Ascending aorta (tissue), 2 donors: ENCODE measurements at regions of chr1 and their contacts with region 1.

Region 1: DNA sequence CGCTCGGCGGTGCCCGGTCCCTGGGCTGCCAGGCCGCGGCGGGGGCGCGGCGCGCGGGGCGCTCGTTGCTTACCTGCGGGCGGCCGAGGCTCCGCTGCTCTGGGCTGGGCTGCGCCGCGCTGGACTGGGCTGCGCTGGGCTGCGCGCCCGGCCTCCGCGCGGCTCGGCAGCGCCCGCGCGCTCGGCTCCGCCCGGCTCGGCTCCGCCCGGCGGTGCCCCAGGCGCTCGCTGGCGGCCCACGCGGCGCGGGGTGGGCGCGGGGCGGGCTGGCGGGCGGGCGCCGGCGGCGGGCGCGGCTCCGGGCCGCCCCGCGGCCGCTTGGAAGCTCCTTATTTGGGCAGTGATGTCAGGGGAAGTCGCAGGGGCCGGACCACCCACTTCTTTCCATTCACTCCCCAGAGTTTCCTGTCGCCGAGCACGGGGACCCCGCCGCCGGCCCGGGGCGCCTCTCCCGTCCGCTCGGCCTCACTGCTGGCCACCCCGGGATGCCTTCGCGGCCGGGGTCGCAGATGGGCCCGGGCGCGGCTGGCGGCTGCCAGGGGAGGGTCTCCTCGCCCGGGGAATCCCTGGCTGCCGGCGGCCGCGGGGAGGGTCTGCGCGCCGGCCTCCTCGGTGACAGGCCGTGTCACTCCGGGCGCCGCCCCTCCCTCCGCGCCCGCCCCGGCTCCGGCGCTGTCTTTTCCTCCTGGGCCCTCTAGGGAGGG is 177.7 kb upstream of the EDN2 start:
- DNase-seq: peak; percentile 46 to 87
- H3K4me3 ChIP-seq: peak overlapping the region; percentile 71 to 96
- H3K27ac ChIP-seq: peak overlapping the region; percentile 97 to 99
- H3K4me1 ChIP-seq: peaks cover 4 to 20% of the 10 kb centered on the region in 2 donors
- H3K27me3 ChIP-seq: no peaks in the 10 kb centered on the region
- CTCF ChIP-seq: no peak

Region 2: GRCh38 chr1:40783001-40783905 is 879.0 kb before region 1 on chr1 and contains the start of gene KCNQ4:
- intact Hi-C with region 1: no loop called
- DNase-seq: peak in 1 of 2 donors; percentile 84
- H3K4me3 ChIP-seq: peak within 1 kb of the TSS; percentile 65 to 69
- H3K27ac ChIP-seq: peak within 1 kb of the TSS; percentile 82 to 91
- H3K4me1 ChIP-seq: peaks cover 6 to 22% of the 10 kb centered on the region in 2 donors
- H3K27me3 ChIP-seq: no peaks in the 10 kb centered on the region
- CTCF ChIP-seq: no peak
- total RNA-seq, gene KCNQ4: 14.5 TPM

Region 3: DNA sequence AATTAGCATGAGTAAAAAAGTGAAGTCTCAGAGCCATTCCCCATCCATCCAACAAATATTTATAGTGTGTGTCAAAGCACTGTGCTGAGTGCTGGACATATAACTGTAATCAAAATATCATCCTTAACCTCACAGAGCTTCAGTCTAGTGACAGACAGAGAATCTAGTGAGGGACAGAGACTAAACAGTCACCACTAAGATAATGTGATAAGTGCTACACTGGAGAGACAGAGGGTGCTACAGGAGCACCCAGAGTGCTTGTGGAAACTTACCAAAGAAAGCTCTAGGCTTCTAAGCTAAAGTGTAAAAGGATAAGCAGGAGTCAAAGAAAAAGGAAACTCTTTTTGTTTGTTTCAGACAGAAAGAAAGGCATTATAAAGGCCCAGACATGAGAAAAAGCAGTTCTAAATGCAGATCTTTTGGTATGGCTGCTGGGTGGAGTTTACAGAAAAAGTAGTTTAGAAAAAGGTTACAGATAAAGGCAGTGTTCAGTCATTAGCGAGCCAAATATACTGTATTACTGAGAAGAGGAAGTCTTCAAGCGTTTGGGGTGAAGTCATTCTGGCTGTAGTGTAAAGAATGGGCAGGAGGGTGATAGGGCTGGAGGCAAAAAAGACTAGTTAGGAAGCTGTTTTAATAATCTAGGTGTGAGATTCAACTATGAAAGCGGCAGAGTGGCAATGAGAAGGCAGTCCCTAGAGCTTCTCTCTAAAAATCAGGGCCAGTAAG is 503.9 kb before region 1 on chr1:
- intact Hi-C with region 1: loop called (anchors 5 kb)
- DNase-seq: no peak
- H3K4me3 ChIP-seq: no peak overlapping the region
- H3K27ac ChIP-seq: peak overlapping the region in 1 of 2 donors; percentile 9
- H3K4me1 ChIP-seq: no peaks in the 10 kb centered on the region
- H3K27me3 ChIP-seq: no peaks in the 10 kb centered on the region
- CTCF ChIP-seq: no peak